OCI-LY7 (cell line): ENCODE measurements at regions of chr6 and their contacts with region 1.

Region 1: GRCh38 chr6:156396068-156396771 is 381.0 kb upstream of the ARID1B start:
- DNase-seq: peak; percentile 89
- H3K4me3 ChIP-seq: peak overlapping the region; percentile 70
- H3K27ac ChIP-seq: peak overlapping the region; percentile 99
- H3K4me1 ChIP-seq: peaks cover 82% of the 10 kb centered on the region
- CTCF ChIP-seq: no peak

Region 2: GRCh38 chr6:156185113-156185512 is 211.1 kb before region 1 on chr6:
- CTCF ChIA-PET with region 1: no interaction called
- POLR2A ChIA-PET with region 1: interaction called, 13 read pairs
- intact Hi-C with region 1: loop called (anchors 5 kb)
- DNase-seq: peak; percentile 85
- H3K4me3 ChIP-seq: no peak overlapping the region
- H3K27ac ChIP-seq: peak overlapping the region; percentile 66
- H3K4me1 ChIP-seq: peaks cover 58% of the 10 kb centered on the region
- CTCF ChIP-seq: no peak

Region 3: GRCh38 chr6:156557251-156557910 is 161.2 kb after region 1 on chr6:
- CTCF ChIA-PET with region 1: no interaction called
- POLR2A ChIA-PET with region 1: no interaction called
- intact Hi-C with region 1: loop called (anchors 1 kb)
- DNase-seq: no peak
- H3K4me3 ChIP-seq: no peak overlapping the region
- H3K27ac ChIP-seq: no peak overlapping the region
- H3K4me1 ChIP-seq: no peaks in the 10 kb centered on the region
- CTCF ChIP-seq: no peak

Region 4: GRCh38 chr6:156634951-156635371 is 238.7 kb after region 1 on chr6:
- CTCF ChIA-PET with region 1: no interaction called
- POLR2A ChIA-PET with region 1: interaction called, 4 read pairs
- intact Hi-C with region 1: loop called (anchors 2 kb)
- DNase-seq: peak; percentile 25
- H3K4me3 ChIP-seq: no peak overlapping the region
- H3K27ac ChIP-seq: peak overlapping the region; percentile 90
- H3K4me1 ChIP-seq: peaks cover 51% of the 10 kb centered on the region
- CTCF ChIP-seq: no peak

Region 5: GRCh38 chr6:156699017-156699421 is 302.8 kb after region 1 on chr6:
- CTCF ChIA-PET with region 1: no interaction called
- POLR2A ChIA-PET with region 1: interaction called, 4 read pairs
- intact Hi-C with region 1: loop called (anchors 2 kb)
- DNase-seq: no peak
- H3K4me3 ChIP-seq: peak overlapping the region; percentile 43
- H3K27ac ChIP-seq: peak overlapping the region; percentile 98
- H3K4me1 ChIP-seq: peaks cover 87% of the 10 kb centered on the region
- CTCF ChIP-seq: no peak

Region 6: DNA sequence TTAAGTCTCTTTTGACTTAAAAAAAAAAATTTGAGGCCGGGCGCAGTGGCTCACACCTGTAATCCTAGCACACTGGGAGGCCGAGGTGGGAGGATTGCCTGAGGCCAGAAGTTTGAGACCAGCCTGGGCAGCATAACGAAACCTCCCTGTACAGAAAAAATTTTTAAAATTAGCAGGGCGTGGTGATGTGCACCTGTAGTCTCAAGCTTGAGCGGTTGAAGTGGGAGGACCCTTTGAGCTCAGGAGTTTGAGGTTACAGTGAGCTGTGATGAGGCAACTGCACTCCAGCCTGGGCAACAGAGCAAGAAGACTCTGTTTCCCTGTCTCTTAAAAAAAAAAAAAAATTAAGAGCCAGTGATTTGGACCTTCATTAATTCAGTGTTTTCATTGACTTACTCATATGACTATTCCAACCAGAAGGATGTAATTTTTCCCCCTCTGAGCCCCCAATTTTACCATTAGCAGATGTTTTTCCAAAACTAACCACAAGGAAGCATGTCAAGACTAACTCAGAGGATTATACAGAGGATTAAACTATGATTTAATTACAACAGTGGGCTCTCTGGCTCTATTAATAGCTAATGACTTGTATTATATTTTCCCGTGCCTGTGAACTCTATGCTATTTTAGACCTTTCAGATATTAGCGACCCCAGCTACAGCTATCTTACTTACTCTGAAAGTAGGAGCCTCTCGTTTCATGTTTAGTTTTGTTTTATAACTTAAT is 456.1 kb after region 1 on chr6:
- CTCF ChIA-PET with region 1: no interaction called
- POLR2A ChIA-PET with region 1: no interaction called
- intact Hi-C with region 1: loop called (anchors 10 kb)
- DNase-seq: peak; percentile 90
- H3K4me3 ChIP-seq: peak overlapping the region; percentile 43
- H3K27ac ChIP-seq: peak overlapping the region; percentile 67
- H3K4me1 ChIP-seq: peaks cover 83% of the 10 kb centered on the region
- CTCF ChIP-seq: no peak

Region 7: GRCh38 chr6:157033428-157034140 is 637.4 kb after region 1 on chr6:
- CTCF ChIA-PET with region 1: no interaction called
- POLR2A ChIA-PET with region 1: no interaction called
- intact Hi-C with region 1: no loop called
- DNase-seq: no peak
- H3K4me3 ChIP-seq: peak overlapping the region; percentile 61
- H3K27ac ChIP-seq: peak overlapping the region; percentile 33
- H3K4me1 ChIP-seq: peaks cover 27% of the 10 kb centered on the region
- CTCF ChIP-seq: no peak

Region 8: GRCh38 chr6:157274471-157275226 is 878.4 kb after region 1 on chr6:
- CTCF ChIA-PET with region 1: no interaction called
- POLR2A ChIA-PET with region 1: no interaction called
- intact Hi-C with region 1: loop called (anchors 5 kb)
- DNase-seq: peak; percentile 86
- H3K4me3 ChIP-seq: peak overlapping the region; percentile 67
- H3K27ac ChIP-seq: peak overlapping the region; percentile 34
- H3K4me1 ChIP-seq: peaks cover 23% of the 10 kb centered on the region
- CTCF ChIP-seq: peak; percentile 70